ENCODE measurements at regions of chr5 and their contacts with region 1.

Region 1: DNA sequence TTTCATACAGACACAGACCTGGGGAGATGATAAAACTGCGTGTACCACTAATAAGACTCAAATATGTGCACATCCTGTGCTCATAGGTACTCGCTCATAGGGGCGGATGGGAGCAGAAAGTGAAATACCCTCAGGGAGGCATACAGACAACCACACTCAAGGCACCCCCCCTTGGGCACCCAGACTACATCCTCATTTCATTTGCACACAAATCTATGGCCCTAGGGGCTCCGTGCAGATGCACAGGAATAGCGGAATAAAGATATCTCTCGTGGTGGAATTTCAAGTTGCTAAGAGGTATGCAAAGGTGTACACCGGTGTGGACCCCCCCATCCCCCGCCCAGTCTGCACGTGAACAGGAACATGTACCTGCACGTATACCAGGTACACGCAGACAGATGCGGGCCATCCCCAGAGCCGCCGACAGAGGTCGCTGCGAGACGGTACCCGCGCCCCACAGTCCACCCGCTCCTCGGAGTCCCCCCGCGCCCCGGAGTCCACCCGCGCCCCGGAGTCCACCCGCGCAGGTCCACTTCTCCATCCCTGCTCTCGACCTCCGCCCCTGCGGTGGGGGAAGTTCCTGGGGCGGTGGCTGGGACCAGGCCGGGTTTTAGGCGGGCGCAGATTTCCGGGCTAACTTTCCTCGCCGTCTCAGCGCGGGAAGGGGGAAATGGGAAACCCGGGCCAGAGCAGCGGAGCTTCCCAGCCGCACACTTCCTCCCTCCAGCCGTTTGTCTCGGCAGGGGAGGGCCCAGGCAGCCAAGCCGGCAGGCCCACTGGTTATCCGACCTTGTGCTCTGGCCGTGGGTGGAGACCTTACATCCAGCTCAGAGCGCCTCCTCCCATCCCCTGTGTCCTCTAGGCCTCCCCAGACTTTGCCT is 1.0 kb upstream of the IL12B start:
- DNase-seq: peak; percentile 64 to 85 (median 71)
- ATAC-seq: peak; percentile 52 to 95 (median 89)
- H3K4me3 ChIP-seq: peak overlapping the region in 11 of 12 donors; percentile 32 to 60 (median 54)
- H3K27ac ChIP-seq: peak overlapping the region in 7 of 12 donors; percentile 14 to 57 (median 28)
- H3K4me1 ChIP-seq: peaks cover 0 to 15% (median 6%) of the 10 kb centered on the region in 12 donors
- H3K27me3 ChIP-seq: peaks cover 0 to 12% (median 0%) of the 10 kb centered on the region in 9 donors
- CTCF ChIP-seq: peak; percentile 58 to 80 (median 73)
- POLR2A ChIP-seq: no peak

Region 2: GRCh38 chr5:159290741-159291140 is 40.6 kb before region 1 on chr5:
- intact Hi-C with region 1: no loop called
- DNase-seq: no peak
- ATAC-seq: no peak
- H3K4me3 ChIP-seq: no peak overlapping the region
- H3K27ac ChIP-seq: no peak overlapping the region
- H3K4me1 ChIP-seq: peaks cover 0 to 6% (median 0%) of the 10 kb centered on the region in 12 donors
- H3K27me3 ChIP-seq: no peaks in the 10 kb centered on the region
- CTCF ChIP-seq: no peak
- POLR2A ChIP-seq: no peak

Region 3: GRCh38 chr5:159310511-159310910 is 20.8 kb before region 1 on chr5:
- intact Hi-C with region 1: no loop called
- DNase-seq: no peak
- ATAC-seq: peak in 2 of 4 donors; percentile 24 to 39
- H3K4me3 ChIP-seq: no peak overlapping the region
- H3K27ac ChIP-seq: no peak overlapping the region
- H3K4me1 ChIP-seq: peaks cover 0 to 8% (median 0%) of the 10 kb centered on the region in 12 donors
- H3K27me3 ChIP-seq: peaks cover 0 to 49% (median 10%) of the 10 kb centered on the region in 9 donors
- CTCF ChIP-seq: no peak
- POLR2A ChIP-seq: no peak

Region 4: GRCh38 chr5:159430361-159431012 is 99.2 kb after region 1 on chr5:
- intact Hi-C with region 1: loop called in 2 of 10 experiments (anchors 10 kb)
- DNase-seq: no peak
- ATAC-seq: no peak
- H3K4me3 ChIP-seq: no peak overlapping the region
- H3K27ac ChIP-seq: no peak overlapping the region
- H3K4me1 ChIP-seq: peaks cover 0 to 4% (median 0%) of the 10 kb centered on the region in 12 donors
- H3K27me3 ChIP-seq: no peaks in the 10 kb centered on the region
- CTCF ChIP-seq: no peak
- POLR2A ChIP-seq: no peak

Region 5: GRCh38 chr5:159712672-159713071 is 381.3 kb after region 1 on chr5:
- intact Hi-C with region 1: no loop called
- DNase-seq: no peak
- ATAC-seq: no peak
- H3K4me3 ChIP-seq: no peak overlapping the region
- H3K27ac ChIP-seq: no peak overlapping the region
- H3K4me1 ChIP-seq: no peaks in the 10 kb centered on the region
- H3K27me3 ChIP-seq: no peaks in the 10 kb centered on the region
- CTCF ChIP-seq: no peak
- POLR2A ChIP-seq: no peak

Region 6: GRCh38 chr5:159773062-159773924 is 442.0 kb after region 1 on chr5:
- intact Hi-C with region 1: loop called in 1 of 10 experiments (anchors 10 kb)
- DNase-seq: peak; percentile 76 to 91 (median 89)
- ATAC-seq: peak; percentile 78 to 99 (median 97)
- H3K4me3 ChIP-seq: peak overlapping the region in 10 of 12 donors; percentile 26 to 57 (median 44)
- H3K27ac ChIP-seq: peak overlapping the region; percentile 40 to 91 (median 84)
- H3K4me1 ChIP-seq: peaks cover 0 to 15% (median 5%) of the 10 kb centered on the region in 12 donors
- H3K27me3 ChIP-seq: peaks cover 0 to 30% (median 0%) of the 10 kb centered on the region in 9 donors
- CTCF ChIP-seq: peak in 10 of 12 donors; percentile 9 to 57 (median 24)
- POLR2A ChIP-seq: peak; percentile 28 to 80

Region 7: DNA sequence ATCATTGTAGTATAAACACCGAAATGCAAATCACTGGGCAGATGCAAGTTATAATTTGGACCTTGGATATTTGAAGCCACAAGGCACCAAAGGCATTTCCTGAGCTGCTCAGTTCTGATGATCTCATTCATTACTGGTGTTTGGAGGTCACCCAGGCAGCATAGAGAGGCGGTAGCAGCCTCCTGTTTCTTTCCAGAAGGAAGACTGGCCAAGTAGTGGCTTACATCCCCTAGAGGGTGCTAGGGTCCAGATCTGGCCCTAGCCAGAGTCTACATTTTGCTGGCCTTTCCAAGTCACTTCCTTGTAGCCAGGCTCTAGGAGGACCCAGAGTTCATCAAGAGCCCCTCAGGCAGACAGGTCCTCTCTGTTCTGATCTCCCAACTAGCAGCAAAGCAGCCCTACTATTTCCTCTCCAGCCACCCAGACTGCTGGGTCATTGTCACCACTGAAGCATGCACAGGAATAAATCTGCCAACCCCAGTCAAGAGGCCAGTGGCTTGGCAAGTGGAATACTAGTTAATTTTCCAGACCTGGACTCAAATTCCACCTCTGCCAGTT is 644.2 kb after region 1 on chr5:
- intact Hi-C with region 1: loop called in 1 of 10 experiments (anchors 10 kb)
- DNase-seq: peak in 4 of 5 donors; percentile 22 to 37 (median 34)
- ATAC-seq: peak; percentile 44 to 89 (median 87)
- H3K4me3 ChIP-seq: no peak overlapping the region
- H3K27ac ChIP-seq: peak overlapping the region in 5 of 12 donors; percentile 9 to 41 (median 24)
- H3K4me1 ChIP-seq: peaks cover 0 to 13% (median 9%) of the 10 kb centered on the region in 12 donors
- H3K27me3 ChIP-seq: peaks cover 0 to 36% (median 17%) of the 10 kb centered on the region in 9 donors
- CTCF ChIP-seq: peak in 4 of 12 donors; percentile 11 to 51 (median 25)
- POLR2A ChIP-seq: no peak

Region 8: GRCh38 chr5:160760008-160760407 is 1428.7 kb after region 1 on chr5:
- intact Hi-C with region 1: no loop called
- DNase-seq: no peak
- ATAC-seq: no peak
- H3K4me3 ChIP-seq: no peak overlapping the region
- H3K27ac ChIP-seq: no peak overlapping the region
- H3K4me1 ChIP-seq: no peaks in the 10 kb centered on the region
- H3K27me3 ChIP-seq: no peaks in the 10 kb centered on the region
- CTCF ChIP-seq: no peak
- POLR2A ChIP-seq: no peak

Measured in heart left ventricle (tissue), 16 donors.